GM13976 (cell line): ENCODE measurements at regions of chr13 and their contacts with region 1.

Region 1: DNA sequence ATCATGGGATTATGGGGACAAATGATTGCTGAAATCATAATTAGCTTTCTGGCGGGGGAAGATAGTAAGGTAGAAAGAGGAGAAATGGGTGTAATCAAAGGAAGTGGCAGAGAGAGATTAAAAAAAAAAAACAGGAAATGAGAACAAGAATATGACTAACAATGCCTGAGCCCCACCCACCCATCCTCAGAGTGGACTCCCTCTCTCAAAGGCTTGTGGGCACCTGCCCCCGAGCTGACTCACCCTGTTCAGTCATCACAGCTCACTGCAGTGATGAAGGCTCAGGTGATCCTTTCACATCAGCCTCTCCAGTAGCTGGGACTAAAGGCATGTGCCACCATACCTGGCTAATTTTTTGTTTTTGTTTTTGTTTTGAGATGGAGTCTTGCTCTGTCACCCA is 26.4 kb upstream of the TPT1 start:
- DNase-seq: peak; percentile 86
- CTCF ChIP-seq: no peak

Region 2: DNA sequence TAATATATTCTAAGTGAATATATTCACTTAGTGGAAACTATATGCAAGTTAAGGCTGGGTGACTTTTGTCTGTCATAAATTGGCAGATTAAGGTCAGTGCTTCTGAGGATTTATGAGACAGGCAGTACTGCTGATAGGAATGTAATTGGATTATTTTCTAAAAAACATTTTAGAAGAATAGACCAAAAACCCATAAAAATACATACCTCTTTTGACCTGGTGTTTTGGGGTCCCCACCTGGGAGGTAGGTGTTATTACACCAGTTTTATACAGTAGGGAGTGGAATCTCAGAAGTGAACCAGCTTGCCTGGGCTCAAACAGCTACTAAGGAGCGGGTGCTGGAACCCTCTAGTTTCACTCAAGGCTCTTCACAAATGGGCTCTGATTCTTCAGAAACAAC is 122.7 kb after region 1 on chr13:
- in situ Hi-C with region 1: loop called (anchors 10 kb)
- DNase-seq: no peak
- CTCF ChIP-seq: peak; percentile 37